Activated naive CD4-positive, alpha-beta T cell treated with anti-CD3 and anti-CD28 coated beads for 36 hours (primary cell): ENCODE measurements at regions of chr5 and their contacts with region 1.

Region 1: DNA sequence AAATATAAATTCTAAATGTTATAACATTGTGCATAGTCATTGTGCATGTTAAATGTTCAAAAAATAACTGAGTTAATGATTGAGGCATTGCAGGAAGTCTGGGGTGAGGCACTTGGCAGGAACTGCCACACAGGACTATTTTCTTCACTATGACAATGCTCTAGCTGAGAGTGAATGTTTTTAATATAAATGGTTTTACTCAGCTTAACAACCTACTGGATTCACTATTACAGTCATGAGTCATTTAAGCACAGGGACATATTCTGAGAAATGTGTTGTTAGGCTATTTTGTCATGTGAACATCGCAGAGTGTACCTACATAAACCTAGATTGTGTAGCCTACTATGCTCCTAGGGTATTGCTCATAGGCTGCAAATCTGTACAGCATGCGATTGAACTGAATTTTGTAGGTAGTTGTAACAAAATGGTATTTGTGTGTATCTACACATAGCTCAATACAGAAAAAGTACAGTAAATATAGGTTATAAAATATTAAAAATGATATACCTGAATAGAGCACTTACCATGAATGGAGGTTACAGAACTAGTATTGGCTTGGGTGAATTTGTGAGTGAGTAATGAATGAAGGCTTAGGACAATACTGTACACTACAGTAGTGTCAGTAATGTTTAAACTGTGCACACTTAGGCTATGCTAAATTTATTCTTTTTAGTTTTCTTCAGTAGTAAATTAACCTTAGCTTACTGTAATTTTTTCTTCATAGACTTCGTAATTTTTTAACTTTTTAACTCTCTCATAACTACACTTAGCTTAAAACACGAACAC is 346.1 kb upstream of the PTGER4 start:
- DNase-seq: peak; percentile 63
- H3K4me3 Mint-ChIP-seq: no peak overlapping the region
- H3K27ac Mint-ChIP-seq: peak overlapping the region; percentile 41
- H3K4me1 Mint-ChIP-seq: peaks cover 15% of the 10 kb centered on the region
- H3K27me3 Mint-ChIP-seq: peaks cover 3% of the 10 kb centered on the region

Region 2: GRCh38 chr5:40210694-40211093 is 123.0 kb before region 1 on chr5:
- CTCF ChIA-PET with region 1: no interaction called
- intact Hi-C with region 1: loop called (anchors 1 kb)
- DNase-seq: no peak
- H3K4me3 Mint-ChIP-seq: no peak overlapping the region
- H3K27ac Mint-ChIP-seq: peak overlapping the region; percentile 98
- H3K4me1 Mint-ChIP-seq: peaks cover 63% of the 10 kb centered on the region
- H3K27me3 Mint-ChIP-seq: no peaks in the 10 kb centered on the region

Region 3: DNA sequence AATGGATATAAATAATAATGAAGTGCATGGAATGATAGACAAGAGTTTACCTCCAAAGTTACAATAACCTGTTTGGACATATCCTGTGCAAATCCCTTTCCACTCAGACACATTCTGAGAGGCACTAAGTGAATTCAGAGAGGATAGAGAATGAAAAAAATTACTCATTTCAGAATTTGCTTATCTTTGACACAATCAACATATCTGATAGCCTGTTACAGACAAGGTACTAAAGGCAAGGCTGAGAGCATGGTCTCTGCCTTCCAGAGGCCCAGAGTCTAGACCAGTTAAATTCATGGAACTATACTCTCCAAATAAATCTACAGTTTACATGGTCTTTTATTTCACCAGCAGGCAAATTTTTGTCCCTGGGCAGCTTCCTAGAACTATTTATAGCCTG is 25.7 kb before region 1 on chr5:
- CTCF ChIA-PET with region 1: no interaction called
- intact Hi-C with region 1: no loop called
- DNase-seq: no peak
- H3K4me3 Mint-ChIP-seq: no peak overlapping the region
- H3K27ac Mint-ChIP-seq: no peak overlapping the region
- H3K4me1 Mint-ChIP-seq: no peaks in the 10 kb centered on the region
- H3K27me3 Mint-ChIP-seq: no peaks in the 10 kb centered on the region